ENCODE measurements at regions of chr4 and their contacts with region 1.

Region 1: DNA sequence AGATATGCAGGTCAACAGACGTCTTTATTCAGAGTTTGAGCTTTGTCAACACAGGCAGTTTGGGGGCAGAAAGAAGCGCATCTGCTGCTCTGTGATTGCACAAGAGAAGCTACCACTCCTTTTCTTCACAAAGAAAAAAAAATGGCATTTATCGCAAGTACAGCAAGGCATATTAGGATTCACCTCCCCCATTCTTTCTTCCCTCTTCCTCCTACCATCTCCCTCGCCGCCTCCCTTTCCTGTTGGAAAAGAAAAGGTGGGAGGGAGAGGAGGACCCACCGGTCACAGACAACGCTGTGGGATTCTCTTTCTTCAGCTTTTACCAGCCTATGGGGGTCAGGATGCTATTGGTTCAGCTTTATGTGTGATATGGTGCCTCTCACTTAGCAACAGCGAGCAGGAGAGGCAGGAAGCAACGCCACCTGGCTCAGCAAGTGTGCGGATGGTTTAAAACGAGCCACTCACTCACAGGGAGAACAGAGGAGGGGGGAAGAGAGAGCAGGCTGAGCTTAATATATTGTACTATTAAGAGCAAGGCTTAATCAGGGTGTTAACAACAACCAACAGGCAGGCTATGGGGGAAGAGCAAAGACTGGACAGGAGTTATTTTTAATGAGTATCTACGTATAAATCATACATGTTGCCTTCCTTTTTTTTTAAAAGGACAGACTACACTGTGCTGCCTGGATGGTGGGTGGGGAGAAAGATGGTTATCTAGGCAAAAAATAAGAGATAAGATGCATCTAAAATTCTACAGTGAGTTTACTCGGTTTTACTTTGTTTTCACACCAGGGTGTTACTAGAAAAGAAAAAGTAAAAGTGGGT is 104.7 kb downstream of the MAML3 start:
- DNase-seq: peak; percentile 87 to 98 (median 96)
- H3K4me3 ChIP-seq: peak overlapping the region; percentile 13 to 84 (median 67)
- H3K27ac ChIP-seq: peak overlapping the region; percentile 91
- H3K4me1 ChIP-seq: peaks cover 35 to 90% (median 83%) of the 10 kb centered on the region in 4 experiments
- H3K27me3 ChIP-seq: no peaks in the 10 kb centered on the region

Region 2: GRCh38 chr4:140012688-140013486 is 36.3 kb before region 1 on chr4:
- CTCF ChIA-PET with region 1: interaction called, 36 read pairs
- POLR2A ChIA-PET with region 1: interaction called, 3 read pairs
- DNase-seq: peak; percentile 82 to 86 (median 84)
- H3K4me3 ChIP-seq: peak overlapping the region in 4 of 7 experiments; percentile 12 to 64 (median 37)
- H3K27ac ChIP-seq: peak overlapping the region in 1 of 2 experiments; percentile 20
- H3K4me1 ChIP-seq: peaks cover 0 to 13% (median 8%) of the 10 kb centered on the region in 4 experiments
- H3K27me3 ChIP-seq: no peaks in the 10 kb centered on the region

Region 3: DNA sequence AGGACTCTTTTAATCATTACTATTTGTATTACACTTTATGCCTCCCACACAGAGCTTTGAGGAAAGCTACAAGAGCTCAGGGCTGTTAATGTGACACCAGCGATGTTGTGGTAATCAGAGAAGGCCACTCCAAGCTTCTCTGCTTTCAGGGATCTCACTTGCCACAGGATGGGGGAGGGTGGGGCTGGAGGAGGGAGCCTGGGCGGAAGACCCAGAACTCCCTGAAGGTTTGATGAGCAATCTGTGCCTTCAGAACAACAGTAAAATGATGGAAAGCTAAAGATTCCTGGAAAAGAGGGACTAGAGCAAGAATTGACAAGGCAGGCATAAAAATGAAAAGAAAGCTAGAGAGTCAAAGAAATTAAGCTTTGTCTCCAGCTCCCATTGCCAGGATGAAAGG is 29.1 kb after region 1 on chr4:
- CTCF ChIA-PET with region 1: interaction called, 10 read pairs
- POLR2A ChIA-PET with region 1: interaction called, 3 read pairs
- DNase-seq: no peak
- H3K4me3 ChIP-seq: no peak overlapping the region
- H3K27ac ChIP-seq: no peak overlapping the region
- H3K4me1 ChIP-seq: peaks cover 3 to 73% (median 55%) of the 10 kb centered on the region in 4 experiments
- H3K27me3 ChIP-seq: no peaks in the 10 kb centered on the region

Region 4: DNA sequence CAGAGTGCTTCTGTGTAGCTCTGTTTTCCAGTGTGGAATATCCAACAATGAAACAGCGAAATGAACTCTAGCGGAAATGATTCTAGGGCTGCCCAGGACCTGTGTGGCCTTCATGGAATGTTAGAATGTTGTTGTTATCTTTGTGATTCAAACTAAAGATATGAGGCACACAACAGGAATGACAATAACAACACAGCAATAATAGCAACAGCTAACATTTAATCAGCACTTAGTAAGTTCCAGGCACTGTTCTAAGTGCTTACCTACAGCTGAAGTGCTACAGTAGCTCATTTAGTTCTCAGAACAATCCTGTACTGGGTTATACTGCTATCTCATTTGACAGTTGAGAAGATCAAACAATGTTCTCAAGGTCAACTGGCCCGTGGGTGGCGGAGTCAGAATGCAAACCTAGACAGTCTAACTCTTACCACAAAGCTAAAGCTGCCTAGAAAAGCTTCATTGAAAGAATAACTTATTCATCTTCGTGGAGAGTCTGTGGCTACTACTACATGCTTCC is 41.0 kb after region 1 on chr4:
- CTCF ChIA-PET with region 1: interaction called, 33 read pairs
- POLR2A ChIA-PET with region 1: interaction called, 15 read pairs
- DNase-seq: no peak
- H3K4me3 ChIP-seq: no peak overlapping the region
- H3K27ac ChIP-seq: no peak overlapping the region
- H3K4me1 ChIP-seq: peaks cover 34 to 64% (median 52%) of the 10 kb centered on the region in 4 experiments
- H3K27me3 ChIP-seq: no peaks in the 10 kb centered on the region

Region 5: GRCh38 chr4:140095694-140096482 is 46.7 kb after region 1 on chr4:
- CTCF ChIA-PET with region 1: interaction called, 33 read pairs
- POLR2A ChIA-PET with region 1: interaction called, 15 read pairs
- DNase-seq: peak; percentile 95 to 97 (median 96)
- H3K4me3 ChIP-seq: peak overlapping the region in 5 of 7 experiments; percentile 17 to 63 (median 52)
- H3K27ac ChIP-seq: peak overlapping the region; percentile 91 to 93
- H3K4me1 ChIP-seq: peaks cover 71 to 99% (median 96%) of the 10 kb centered on the region in 4 experiments
- H3K27me3 ChIP-seq: no peaks in the 10 kb centered on the region

Region 6: GRCh38 chr4:140153718-140154571 is 104.7 kb after region 1 on chr4 and contains the start of gene MAML3:
- CTCF ChIA-PET with region 1: interaction called, 21 read pairs
- POLR2A ChIA-PET with region 1: interaction called, 31 read pairs
- DNase-seq: peak; percentile 96 to 98 (median 96)
- H3K4me3 ChIP-seq: peak within 1 kb of the TSS; percentile 63 to 100 (median 98)
- H3K27ac ChIP-seq: peak within 1 kb of the TSS; percentile 81 to 91
- H3K4me1 ChIP-seq: peaks cover 28 to 61% (median 54%) of the 10 kb centered on the region in 4 experiments
- H3K27me3 ChIP-seq: no peaks in the 10 kb centered on the region

Region 7: GRCh38 chr4:140252742-140253555 is 203.7 kb after region 1 on chr4:
- CTCF ChIA-PET with region 1: interaction called, 13 read pairs
- POLR2A ChIA-PET with region 1: interaction called, 4 read pairs
- DNase-seq: peak; percentile 63 to 77 (median 76)
- H3K4me3 ChIP-seq: peak overlapping the region; percentile 41 to 80 (median 68)
- H3K27ac ChIP-seq: peak overlapping the region; percentile 27 to 74
- H3K4me1 ChIP-seq: peaks cover 8 to 35% (median 22%) of the 10 kb centered on the region in 4 experiments
- H3K27me3 ChIP-seq: no peaks in the 10 kb centered on the region